Ascending aorta (tissue), 2 donors: ENCODE measurements at regions of chr3 and their contacts with region 1.

Region 1: GRCh38 chr3:82133070-82133606 is 371.7 kb upstream of the GBE1 start:
- DNase-seq: peak in 1 of 2 donors; percentile 67
- H3K4me3 ChIP-seq: no peak overlapping the region
- H3K27ac ChIP-seq: no peak overlapping the region
- H3K4me1 ChIP-seq: no peaks in the 10 kb centered on the region
- H3K27me3 ChIP-seq: no peaks in the 10 kb centered on the region
- CTCF ChIP-seq: peak; percentile 64 to 76 (median 66)

Region 2: GRCh38 chr3:81419228-81419627 is 713.9 kb before region 1 on chr3:
- intact Hi-C with region 1: loop called (anchors 2 kb)
- DNase-seq: no peak
- H3K4me3 ChIP-seq: no peak overlapping the region
- H3K27ac ChIP-seq: no peak overlapping the region
- H3K4me1 ChIP-seq: no peaks in the 10 kb centered on the region
- H3K27me3 ChIP-seq: no peaks in the 10 kb centered on the region
- CTCF ChIP-seq: peak in 2 of 3 experiments; percentile 39 to 64

Region 3: GRCh38 chr3:82194870-82195269 is 61.7 kb after region 1 on chr3:
- intact Hi-C with region 1: no loop called
- DNase-seq: no peak
- H3K4me3 ChIP-seq: no peak overlapping the region
- H3K27ac ChIP-seq: no peak overlapping the region
- H3K4me1 ChIP-seq: no peaks in the 10 kb centered on the region
- H3K27me3 ChIP-seq: no peaks in the 10 kb centered on the region
- CTCF ChIP-seq: no peak

Region 4: GRCh38 chr3:82999777-83000176 is 866.6 kb after region 1 on chr3:
- intact Hi-C with region 1: no loop called
- DNase-seq: no peak
- H3K4me3 ChIP-seq: no peak overlapping the region
- H3K27ac ChIP-seq: no peak overlapping the region
- H3K4me1 ChIP-seq: no peaks in the 10 kb centered on the region
- H3K27me3 ChIP-seq: no peaks in the 10 kb centered on the region
- CTCF ChIP-seq: no peak